ENCODE measurements at regions of chr9 and their contacts with region 1.

Region 1: GRCh38 chr9:69971643-69972449 is 71.8 kb upstream of the MAMDC2 start:
- DNase-seq: peak; percentile 88
- ATAC-seq: peak; percentile 87

Region 2: DNA sequence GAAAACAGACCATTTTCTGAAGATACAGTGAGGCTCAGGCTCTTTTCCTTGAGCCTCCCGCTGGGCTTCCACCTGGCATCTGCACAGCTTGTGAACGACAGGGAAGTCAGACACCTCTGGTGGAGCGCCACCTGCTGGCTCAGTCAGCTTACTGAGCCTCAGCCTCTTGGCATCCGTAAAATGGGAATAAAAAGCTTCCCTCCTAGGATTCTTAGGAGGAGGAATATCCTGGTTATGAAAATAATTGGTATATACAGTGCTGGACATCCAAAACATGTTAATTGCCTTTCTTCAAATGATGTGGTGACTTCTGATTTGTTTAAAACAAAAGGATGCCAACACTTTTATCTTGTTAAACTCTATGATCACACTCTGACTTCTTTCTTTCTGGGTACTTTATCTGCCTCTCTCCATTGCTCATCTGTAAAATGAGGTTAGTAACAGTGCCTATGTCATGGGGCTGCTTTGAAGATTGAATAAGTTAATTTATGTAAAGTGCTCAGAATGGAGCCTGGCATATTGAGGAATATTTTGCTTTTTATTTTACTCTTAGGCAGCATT is 139.3 kb after region 1 on chr9:
- intact Hi-C with region 1: loop called (anchors 5 kb)
- DNase-seq: peak; percentile 91
- ATAC-seq: peak; percentile 87